Esophagus muscularis mucosa (tissue), 4 donors: ENCODE measurements at regions of chr1 and their contacts with region 1.

Region 1: DNA sequence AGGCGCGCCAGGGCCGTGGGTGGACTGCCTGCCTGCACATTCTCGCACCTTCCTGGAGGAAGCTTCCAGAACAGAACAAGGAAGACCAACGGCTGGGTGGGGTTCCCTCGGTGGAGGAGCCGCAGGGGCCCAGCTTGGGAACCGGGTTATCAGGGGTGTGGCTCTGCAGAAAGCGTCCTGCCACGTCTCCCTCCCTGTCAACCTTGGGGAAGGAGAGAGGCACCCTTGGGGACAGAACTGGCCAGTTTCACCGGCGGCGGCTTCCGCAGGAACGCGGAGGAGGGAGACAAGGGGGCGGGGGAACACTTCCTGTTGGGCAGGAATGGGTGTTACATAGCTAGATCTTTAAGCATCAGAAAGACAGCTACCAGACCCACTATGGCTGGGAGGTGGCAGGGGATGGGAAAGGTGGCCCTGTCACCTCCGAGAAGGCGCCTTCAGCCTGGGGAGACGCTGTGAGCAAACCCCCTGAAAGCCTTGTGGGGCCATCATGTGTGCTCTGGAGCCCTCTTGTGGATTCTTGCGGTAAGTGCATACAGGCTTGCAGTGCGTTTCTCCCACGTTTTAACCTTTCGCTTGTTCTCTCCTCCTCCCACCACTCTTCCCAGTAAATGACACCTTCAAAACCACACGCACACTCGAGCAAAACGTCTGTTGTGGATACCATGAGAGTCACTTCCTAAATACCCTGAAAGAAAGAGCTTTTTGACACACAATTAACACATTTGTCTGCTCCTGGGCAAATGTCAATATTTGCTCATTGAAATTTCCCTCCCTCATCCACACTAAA is 3.8 kb upstream of the PLEKHA6 start:
- DNase-seq: no peak
- H3K4me3 ChIP-seq: peak overlapping the region; percentile 49 to 60 (median 54)
- H3K27ac ChIP-seq: peak overlapping the region in 3 of 4 donors; percentile 3 to 68 (median 10)
- H3K4me1 ChIP-seq: peaks cover 17 to 31% (median 25%) of the 10 kb centered on the region in 4 donors
- H3K27me3 ChIP-seq: peaks cover 0 to 57% (median 3%) of the 10 kb centered on the region in 4 donors
- CTCF ChIP-seq: peak; percentile 97 to 99 (median 98)
- EP300 ChIP-seq: no peak
- POLR2A ChIP-seq: no peak

Region 2: DNA sequence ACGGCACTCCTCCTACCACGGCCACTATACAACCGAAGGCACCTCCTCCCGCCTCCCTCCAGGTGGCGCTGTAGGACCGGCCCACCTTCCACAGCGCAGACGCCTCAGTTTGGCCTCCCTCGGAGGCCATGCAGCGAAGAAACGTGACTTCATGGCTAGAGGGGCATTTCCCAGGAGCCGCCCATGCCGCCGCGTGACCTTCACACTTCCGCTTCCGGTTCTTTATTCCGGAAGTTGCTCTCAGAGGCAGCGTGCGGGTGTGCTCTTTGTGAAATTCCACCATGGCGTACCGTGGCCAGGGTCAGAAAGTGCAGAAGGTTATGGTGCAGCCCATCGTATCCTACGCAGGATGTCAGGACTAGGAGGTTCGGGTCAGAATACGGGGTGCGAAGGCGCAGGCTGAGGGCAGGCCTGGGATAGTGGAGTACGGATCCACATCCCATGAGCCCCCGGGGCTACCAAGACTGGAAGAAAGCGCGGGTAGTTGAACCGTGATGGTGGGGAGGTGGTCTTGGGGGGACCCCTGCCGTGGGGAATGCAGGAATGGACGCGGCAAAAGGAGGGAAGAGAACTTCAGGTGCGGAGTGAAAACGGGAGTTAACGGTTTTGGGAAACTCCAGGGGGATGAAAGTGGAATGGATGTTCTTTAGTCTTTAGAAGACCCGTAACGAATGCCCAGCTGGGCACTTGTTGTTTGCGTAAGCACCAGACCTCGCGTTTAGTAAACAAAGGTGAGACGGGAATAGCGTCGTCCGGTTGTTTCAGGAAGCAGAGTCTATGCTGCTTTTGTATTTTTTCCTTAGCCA is 501.9 kb before region 1 on chr1 and contains the start of gene SNRPE:
- intact Hi-C with region 1: loop called (anchors 10 kb)
- DNase-seq: peak; percentile 99
- H3K4me3 ChIP-seq: peak within 1 kb of the TSS; percentile 76 to 84 (median 78)
- H3K27ac ChIP-seq: peak within 1 kb of the TSS; percentile 58 to 76 (median 68)
- H3K4me1 ChIP-seq: peaks cover 20 to 42% (median 36%) of the 10 kb centered on the region in 4 donors
- H3K27me3 ChIP-seq: no peaks in the 10 kb centered on the region
- CTCF ChIP-seq: peak; percentile 91 to 96 (median 96)
- EP300 ChIP-seq: no peak
- POLR2A ChIP-seq: peak; percentile 12
- total RNA-seq, gene SNRPE: 19.0 to 45.7 (median 35.1) TPM

Region 3: GRCh38 chr1:204162231-204163074 is 201.1 kb before region 1 on chr1:
- intact Hi-C with region 1: loop called (anchors 1 kb)
- DNase-seq: no peak
- H3K4me3 ChIP-seq: no peak overlapping the region
- H3K27ac ChIP-seq: no peak overlapping the region
- H3K4me1 ChIP-seq: peaks cover 0 to 3% (median 1%) of the 10 kb centered on the region in 4 donors
- H3K27me3 ChIP-seq: peaks cover 0 to 42% (median 0%) of the 10 kb centered on the region in 4 donors
- CTCF ChIP-seq: peak in 2 of 3 experiments; percentile 96
- EP300 ChIP-seq: no peak
- POLR2A ChIP-seq: no peak

Region 4: GRCh38 chr1:204213668-204214662 is 149.6 kb before region 1 on chr1 and contains the start of gene GOLT1A:
- intact Hi-C with region 1: loop called (anchors 2 kb)
- DNase-seq: no peak
- H3K4me3 ChIP-seq: peak within 1 kb of the TSS in 3 of 4 donors; percentile 22 to 45 (median 27)
- H3K27ac ChIP-seq: no peak within 1 kb of the TSS
- H3K4me1 ChIP-seq: peaks cover 5 to 10% (median 10%) of the 10 kb centered on the region in 4 donors
- H3K27me3 ChIP-seq: peaks cover 0 to 54% (median 3%) of the 10 kb centered on the region in 4 donors
- CTCF ChIP-seq: peak; percentile 51 to 61 (median 58)
- EP300 ChIP-seq: no peak
- POLR2A ChIP-seq: no peak
- total RNA-seq, gene GOLT1A: 0.39 to 0.83 TPM in 2 of 4 donors, not detected in the others

Region 5: DNA sequence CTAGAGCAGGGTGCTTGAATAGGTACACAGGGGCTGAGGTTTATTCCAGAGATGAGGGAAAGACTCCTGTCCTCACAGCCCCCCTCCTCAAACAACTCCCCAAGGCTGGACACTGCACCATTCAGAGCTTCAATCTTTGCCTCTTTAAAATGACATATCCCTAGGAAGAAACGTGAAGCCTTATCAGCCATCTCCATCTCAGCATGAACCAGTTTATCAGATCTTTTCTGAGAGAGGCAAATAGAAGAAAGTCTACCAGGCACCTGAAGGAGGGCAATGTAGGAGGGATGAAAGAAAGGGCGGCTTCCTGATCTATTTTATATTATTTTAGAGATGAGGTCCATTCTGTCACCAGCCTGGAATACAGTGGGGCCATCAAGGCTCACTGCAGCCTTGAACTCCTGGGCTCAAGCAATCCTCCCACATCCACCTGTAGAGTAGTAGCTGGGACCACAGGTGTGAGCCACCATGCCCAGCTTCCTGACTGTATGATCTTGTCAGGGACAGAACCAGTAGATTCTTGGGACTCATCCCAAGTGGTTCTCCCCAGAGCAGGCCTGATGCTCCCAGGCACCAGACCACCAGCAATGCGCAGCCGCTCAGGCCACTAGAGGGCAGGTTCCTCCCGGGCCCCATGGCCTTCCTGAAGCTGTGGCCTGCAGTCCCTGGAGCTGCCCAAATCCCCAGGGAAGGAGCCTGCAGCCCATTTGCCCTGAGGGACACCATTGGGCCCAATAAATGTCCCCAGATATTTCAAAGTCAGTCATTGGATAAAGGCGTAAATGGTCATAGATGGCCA is 105.4 kb before region 1 on chr1:
- intact Hi-C with region 1: loop called (anchors 2 kb)
- DNase-seq: no peak
- H3K4me3 ChIP-seq: no peak overlapping the region
- H3K27ac ChIP-seq: no peak overlapping the region
- H3K4me1 ChIP-seq: peaks cover 0 to 22% (median 9%) of the 10 kb centered on the region in 4 donors
- H3K27me3 ChIP-seq: no peaks in the 10 kb centered on the region
- CTCF ChIP-seq: peak; percentile 53 to 64 (median 57)
- EP300 ChIP-seq: no peak
- POLR2A ChIP-seq: no peak